ENCODE measurements at regions of chr18 and their contacts with region 1.

Region 1: GRCh38 chr18:70454704-70455322 is 166.0 kb downstream of the SOCS6 start:
- DNase-seq: peak; percentile 27
- H3K4me3 Mint-ChIP-seq: no peak overlapping the region
- H3K27ac Mint-ChIP-seq: no peak overlapping the region
- H3K4me1 Mint-ChIP-seq: no peaks in the 10 kb centered on the region
- H3K27me3 Mint-ChIP-seq: peaks cover 3% of the 10 kb centered on the region

Region 2: GRCh38 chr18:68847219-68847837 is 1607.5 kb before region 1 on chr18:
- CTCF ChIA-PET with region 1: no interaction called
- POLR2A ChIA-PET with region 1: no interaction called
- intact Hi-C with region 1: loop called (anchors 5 kb)
- DNase-seq: no peak
- H3K4me3 Mint-ChIP-seq: no peak overlapping the region
- H3K27ac Mint-ChIP-seq: no peak overlapping the region
- H3K4me1 Mint-ChIP-seq: no peaks in the 10 kb centered on the region
- H3K27me3 Mint-ChIP-seq: no peaks in the 10 kb centered on the region

Region 3: DNA sequence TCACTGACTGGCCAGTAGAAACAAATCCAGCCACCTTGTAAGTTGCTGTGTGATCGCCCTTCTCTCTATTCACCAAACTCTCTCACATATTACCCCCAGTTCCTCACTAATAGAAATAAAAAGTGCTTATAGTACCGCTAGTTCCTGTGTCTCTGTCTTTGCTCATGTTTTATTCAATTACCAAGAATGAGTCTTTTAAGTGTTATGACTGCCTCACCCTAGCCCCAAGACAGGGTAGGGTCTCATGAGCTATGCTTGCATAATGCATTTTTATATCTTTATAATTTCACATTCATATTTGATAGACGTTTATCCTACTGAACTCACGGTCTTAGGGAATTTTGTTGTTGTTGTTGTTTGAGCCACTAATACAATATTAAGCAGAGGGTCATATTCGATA is 1163.8 kb before region 1 on chr18:
- CTCF ChIA-PET with region 1: no interaction called
- POLR2A ChIA-PET with region 1: no interaction called
- intact Hi-C with region 1: no loop called
- DNase-seq: no peak
- H3K4me3 Mint-ChIP-seq: no peak overlapping the region
- H3K27ac Mint-ChIP-seq: no peak overlapping the region
- H3K4me1 Mint-ChIP-seq: no peaks in the 10 kb centered on the region
- H3K27me3 Mint-ChIP-seq: no peaks in the 10 kb centered on the region

Region 4: DNA sequence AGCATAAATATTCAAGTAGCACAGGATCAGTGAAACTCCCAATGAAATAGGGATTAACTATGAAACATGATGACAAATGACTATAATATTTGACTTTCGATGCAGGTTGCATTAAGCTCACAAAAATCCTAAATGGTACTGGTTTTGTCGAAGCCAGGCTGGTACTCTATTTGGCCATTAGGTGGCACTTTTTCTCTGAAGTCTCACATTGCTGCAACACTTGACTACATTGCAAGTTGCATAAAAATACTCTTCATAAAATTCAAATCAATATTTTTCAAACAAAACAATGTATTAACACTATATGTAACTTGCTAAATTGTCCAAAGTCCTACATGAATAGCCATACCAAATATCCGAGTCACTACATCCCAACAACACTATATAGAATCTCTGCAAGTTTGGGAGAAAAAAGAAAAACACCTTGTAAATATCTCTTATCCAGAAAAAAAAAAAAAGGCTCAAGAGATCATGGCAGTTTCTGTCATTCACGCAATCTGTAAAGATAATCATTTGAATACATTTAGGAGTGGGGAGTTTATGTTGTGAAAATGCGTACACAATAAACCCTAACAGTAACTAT is 258.9 kb before region 1 on chr18:
- CTCF ChIA-PET with region 1: interaction called, 38 read pairs
- POLR2A ChIA-PET with region 1: interaction called, 3 read pairs
- intact Hi-C with region 1: loop called (anchors 1 kb)
- DNase-seq: peak; percentile 16
- H3K4me3 Mint-ChIP-seq: no peak overlapping the region
- H3K27ac Mint-ChIP-seq: no peak overlapping the region
- H3K4me1 Mint-ChIP-seq: peaks cover 33% of the 10 kb centered on the region
- H3K27me3 Mint-ChIP-seq: no peaks in the 10 kb centered on the region

Region 5: GRCh38 chr18:70415823-70416488 is 38.9 kb before region 1 on chr18:
- CTCF ChIA-PET with region 1: no interaction called
- POLR2A ChIA-PET with region 1: no interaction called
- intact Hi-C with region 1: no loop called
- DNase-seq: no peak
- H3K4me3 Mint-ChIP-seq: no peak overlapping the region
- H3K27ac Mint-ChIP-seq: no peak overlapping the region
- H3K4me1 Mint-ChIP-seq: no peaks in the 10 kb centered on the region
- H3K27me3 Mint-ChIP-seq: peaks cover 12% of the 10 kb centered on the region

Region 6: DNA sequence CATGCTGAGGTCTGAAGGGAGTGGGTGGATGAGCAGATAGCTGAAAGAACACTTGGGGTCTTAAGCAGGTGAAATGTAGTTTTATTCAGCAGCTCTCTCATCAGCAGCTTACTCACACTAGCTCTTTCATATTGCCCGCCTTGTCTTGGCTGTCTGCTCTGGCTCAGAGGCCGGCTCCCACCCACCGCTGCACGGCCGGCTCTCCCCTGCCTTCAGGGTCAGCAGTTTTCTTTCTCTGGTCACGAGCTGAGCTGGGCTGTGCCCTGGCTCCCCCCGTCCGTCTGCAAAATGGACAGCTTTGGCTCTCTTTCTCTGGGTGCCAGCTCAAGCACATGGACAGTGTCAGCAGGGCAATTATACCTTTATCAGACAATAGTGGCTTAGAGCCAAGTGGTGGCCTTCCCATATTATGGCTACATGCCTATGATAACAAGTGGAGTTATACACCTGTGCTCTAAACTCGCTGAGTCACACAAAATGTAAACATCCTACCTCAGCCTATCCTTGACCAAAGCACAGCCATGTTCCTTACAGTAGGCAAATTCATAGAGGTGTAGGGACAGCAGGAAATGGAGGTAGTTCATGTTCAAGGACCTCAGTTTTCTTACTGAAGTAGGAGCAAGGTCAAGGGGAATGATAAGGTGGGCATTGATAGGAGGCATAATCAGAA is 58.8 kb after region 1 on chr18:
- CTCF ChIA-PET with region 1: no interaction called
- POLR2A ChIA-PET with region 1: no interaction called
- intact Hi-C with region 1: no loop called
- DNase-seq: no peak
- H3K4me3 Mint-ChIP-seq: no peak overlapping the region
- H3K27ac Mint-ChIP-seq: no peak overlapping the region
- H3K4me1 Mint-ChIP-seq: no peaks in the 10 kb centered on the region
- H3K27me3 Mint-ChIP-seq: no peaks in the 10 kb centered on the region

Region 7: GRCh38 chr18:70848329-70848728 is 393.5 kb after region 1 on chr18:
- CTCF ChIA-PET with region 1: no interaction called
- POLR2A ChIA-PET with region 1: no interaction called
- intact Hi-C with region 1: no loop called
- DNase-seq: no peak
- H3K4me3 Mint-ChIP-seq: no peak overlapping the region
- H3K27ac Mint-ChIP-seq: no peak overlapping the region
- H3K4me1 Mint-ChIP-seq: no peaks in the 10 kb centered on the region
- H3K27me3 Mint-ChIP-seq: no peaks in the 10 kb centered on the region

Measured in activated CD4-positive, alpha-beta memory T cell treated with anti-CD3 and anti-CD28 coated beads for 36 hours (primary cell).